ENCODE measurements at regions of chr1 and their contacts with region 1.

Region 1: GRCh38 chr1:198465201-198466144 is 75.0 kb downstream of the ATP6V1G3 start:
- DNase-seq: peak in 3 of 14 experiments; percentile 54 to 64 (median 57)
- ATAC-seq: peak; percentile 60
- H3K4me3 ChIP-seq: no peak overlapping the region
- H3K4me3 Mint-ChIP-seq: no peak overlapping the region
- H3K27ac ChIP-seq: no peak overlapping the region
- H3K27ac Mint-ChIP-seq: no peak overlapping the region
- H3K4me1 ChIP-seq: no peaks in the 10 kb centered on the region
- H3K4me1 Mint-ChIP-seq: no peaks in the 10 kb centered on the region
- H3K27me3 ChIP-seq: no peaks in the 10 kb centered on the region
- H3K27me3 Mint-ChIP-seq: no peaks in the 10 kb centered on the region
- CTCF ChIP-seq: peak; percentile 73

Region 2: DNA sequence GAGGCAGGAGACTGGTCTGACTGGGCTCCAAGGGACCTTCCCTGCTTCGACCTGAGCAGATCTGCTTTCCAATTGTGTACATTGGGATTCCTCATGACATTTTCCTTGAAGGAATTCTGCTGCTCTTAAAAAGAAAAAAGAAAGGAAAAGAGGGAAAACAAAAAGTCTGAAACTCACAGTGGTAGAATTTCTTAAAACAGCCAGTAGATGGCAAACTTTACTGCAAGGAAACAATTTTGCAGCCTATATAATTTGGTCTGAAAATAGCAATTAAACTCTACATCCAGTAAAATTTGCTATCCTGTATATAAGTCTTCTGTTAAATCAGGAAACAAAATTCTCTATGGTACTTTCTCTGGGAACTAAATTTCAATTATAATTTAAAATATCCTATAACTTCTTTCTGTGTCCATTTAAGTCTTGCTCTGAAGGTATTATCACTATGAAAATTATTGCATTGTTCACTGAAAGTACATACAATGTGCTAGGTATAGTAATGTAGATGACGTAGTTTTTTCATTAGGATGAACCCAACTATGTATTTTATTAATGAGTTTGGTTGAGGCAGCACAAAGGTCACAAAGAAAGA is 1137.6 kb before region 1 on chr1:
- CTCF ChIA-PET with region 1: no interaction called
- POLR2A ChIA-PET with region 1: no interaction called
- intact Hi-C with region 1: loop called in 1 of 2 experiments (anchors 10 kb)
- DNase-seq: peak in 2 of 14 experiments; percentile 2 to 9
- ATAC-seq: no peak
- H3K4me3 ChIP-seq: no peak overlapping the region
- H3K4me3 Mint-ChIP-seq: no peak overlapping the region
- H3K27ac ChIP-seq: no peak overlapping the region
- H3K27ac Mint-ChIP-seq: no peak overlapping the region
- H3K4me1 ChIP-seq: no peaks in the 10 kb centered on the region
- H3K4me1 Mint-ChIP-seq: no peaks in the 10 kb centered on the region
- H3K27me3 ChIP-seq: no peaks in the 10 kb centered on the region
- H3K27me3 Mint-ChIP-seq: no peaks in the 10 kb centered on the region
- CTCF ChIP-seq: peak; percentile 69

Region 3: DNA sequence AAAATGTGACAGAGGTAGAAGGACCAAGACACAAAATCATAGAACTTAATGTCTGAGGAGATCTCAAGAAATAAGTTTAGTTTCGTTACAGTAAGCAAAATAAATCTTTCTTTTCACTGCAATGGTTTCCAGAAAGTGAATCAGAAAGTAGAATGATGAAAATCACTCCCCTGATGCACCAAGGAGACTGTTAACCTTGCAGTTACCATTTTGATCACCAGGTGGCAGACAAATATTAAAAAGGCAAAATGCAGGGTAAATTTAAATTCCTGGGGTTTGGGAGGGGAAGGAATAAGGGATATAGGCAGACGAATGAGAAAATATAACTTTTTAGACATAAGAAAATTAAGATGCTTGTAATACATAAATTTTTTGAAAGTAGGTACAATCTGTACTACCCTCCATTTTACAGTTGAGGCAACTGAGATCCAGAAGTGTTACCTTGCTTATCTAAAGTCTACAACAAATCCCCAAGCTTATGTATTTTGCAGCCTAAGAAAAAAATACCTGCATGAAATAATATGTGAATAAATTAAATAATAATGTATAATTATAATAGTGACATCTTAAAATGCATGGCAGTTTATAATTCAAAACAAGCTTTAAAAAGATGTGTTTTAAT is 944.2 kb before region 1 on chr1:
- CTCF ChIA-PET with region 1: no interaction called
- POLR2A ChIA-PET with region 1: no interaction called
- intact Hi-C with region 1: loop called (anchors 1 to 5 kb)
- DNase-seq: peak in 4 of 14 experiments; percentile 5 to 57 (median 50)
- ATAC-seq: peak; percentile 52
- H3K4me3 ChIP-seq: no peak overlapping the region
- H3K4me3 Mint-ChIP-seq: no peak overlapping the region
- H3K27ac ChIP-seq: no peak overlapping the region
- H3K27ac Mint-ChIP-seq: no peak overlapping the region
- H3K4me1 ChIP-seq: no peaks in the 10 kb centered on the region
- H3K4me1 Mint-ChIP-seq: no peaks in the 10 kb centered on the region
- H3K27me3 ChIP-seq: no peaks in the 10 kb centered on the region
- H3K27me3 Mint-ChIP-seq: no peaks in the 10 kb centered on the region
- CTCF ChIP-seq: peak; percentile 85

Region 4: DNA sequence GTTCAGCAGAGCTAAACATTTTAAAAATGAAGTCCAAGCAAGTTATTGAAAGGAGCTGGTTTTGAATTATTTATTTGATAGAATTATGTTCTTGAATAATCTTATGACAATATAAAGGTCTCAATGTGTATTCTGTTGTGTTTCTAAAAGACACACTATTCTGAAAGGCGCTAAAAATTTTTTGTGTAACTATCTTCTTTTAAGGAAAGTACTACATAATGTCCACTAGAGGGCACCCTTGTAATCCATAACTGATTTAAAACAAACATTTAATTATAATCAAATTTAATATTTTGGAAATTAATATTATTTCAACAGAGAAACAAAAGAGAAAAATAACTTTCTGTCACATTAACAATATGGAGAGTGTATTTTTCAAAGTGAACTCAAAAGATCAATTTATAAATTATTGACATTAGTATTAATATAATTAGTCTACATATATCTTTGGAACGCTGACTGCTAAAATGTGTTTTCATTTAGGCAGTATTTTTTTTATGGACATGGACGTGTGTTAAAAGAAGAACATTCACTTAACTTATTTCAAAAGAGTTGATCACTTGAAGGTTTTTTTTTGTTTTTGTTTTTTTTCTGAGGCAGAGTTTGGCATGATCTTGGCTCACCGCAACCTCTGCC is 938.6 kb before region 1 on chr1:
- CTCF ChIA-PET with region 1: no interaction called
- POLR2A ChIA-PET with region 1: no interaction called
- intact Hi-C with region 1: loop called (anchors 1 to 5 kb)
- DNase-seq: peak in 3 of 14 experiments; percentile 40 to 59 (median 52)
- ATAC-seq: peak; percentile 43
- H3K4me3 ChIP-seq: no peak overlapping the region
- H3K4me3 Mint-ChIP-seq: no peak overlapping the region
- H3K27ac ChIP-seq: no peak overlapping the region
- H3K27ac Mint-ChIP-seq: no peak overlapping the region
- H3K4me1 ChIP-seq: no peaks in the 10 kb centered on the region
- H3K4me1 Mint-ChIP-seq: no peaks in the 10 kb centered on the region
- H3K27me3 ChIP-seq: no peaks in the 10 kb centered on the region
- H3K27me3 Mint-ChIP-seq: no peaks in the 10 kb centered on the region
- CTCF ChIP-seq: peak; percentile 87

Region 5: DNA sequence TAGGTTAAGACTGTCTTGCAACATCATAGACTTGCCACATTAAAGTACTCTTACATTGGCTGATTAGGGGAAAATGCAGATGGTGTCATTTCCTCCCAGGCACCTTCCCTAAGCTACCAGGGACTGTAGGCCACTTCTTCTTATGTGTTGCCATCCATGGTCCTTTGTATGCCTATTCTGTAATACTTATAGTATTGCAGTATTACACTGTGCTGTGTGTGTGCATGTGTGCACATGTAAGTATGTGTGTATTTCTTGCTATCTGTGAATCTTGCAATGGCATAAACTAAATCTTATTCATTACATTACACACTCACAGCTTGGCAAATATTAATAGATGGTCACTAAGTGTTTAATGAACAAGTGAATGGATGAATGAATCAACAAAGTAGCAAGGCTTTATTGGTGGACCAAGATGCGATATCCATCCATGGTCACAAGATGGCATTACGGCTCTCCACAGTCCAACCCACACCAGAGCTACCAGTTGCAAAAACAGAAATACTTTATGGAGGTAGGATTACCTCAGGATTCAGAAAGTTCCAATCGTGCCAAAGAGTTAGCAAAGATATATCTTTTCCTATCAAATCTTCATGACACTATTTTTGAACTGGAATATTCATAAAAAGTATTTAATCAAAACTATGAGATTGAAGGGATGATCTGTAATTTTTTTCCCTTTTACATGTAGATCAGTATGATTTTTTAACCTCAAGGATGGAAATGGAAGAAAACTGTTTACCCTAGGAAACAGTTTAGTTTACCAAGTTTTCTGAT is 850.4 kb before region 1 on chr1:
- CTCF ChIA-PET with region 1: no interaction called
- POLR2A ChIA-PET with region 1: no interaction called
- intact Hi-C with region 1: loop called (anchors 5 kb)
- DNase-seq: peak in 10 of 14 experiments; percentile 1 to 50 (median 6)
- ATAC-seq: peak; percentile 43
- H3K4me3 ChIP-seq: no peak overlapping the region
- H3K4me3 Mint-ChIP-seq: no peak overlapping the region
- H3K27ac ChIP-seq: no peak overlapping the region
- H3K27ac Mint-ChIP-seq: no peak overlapping the region
- H3K4me1 ChIP-seq: no peaks in the 10 kb centered on the region
- H3K4me1 Mint-ChIP-seq: peaks cover 5% of the 10 kb centered on the region
- H3K27me3 ChIP-seq: no peaks in the 10 kb centered on the region
- H3K27me3 Mint-ChIP-seq: no peaks in the 10 kb centered on the region
- CTCF ChIP-seq: peak; percentile 58

Region 6: GRCh38 chr1:197868751-197869489 is 596.6 kb before region 1 on chr1:
- CTCF ChIA-PET with region 1: no interaction called
- POLR2A ChIA-PET with region 1: no interaction called
- intact Hi-C with region 1: loop called in 1 of 2 experiments (anchors 5 kb)
- DNase-seq: peak in 11 of 14 experiments; percentile 2 to 76 (median 25)
- ATAC-seq: peak; percentile 89
- H3K4me3 ChIP-seq: no peak overlapping the region
- H3K4me3 Mint-ChIP-seq: no peak overlapping the region
- H3K27ac ChIP-seq: no peak overlapping the region
- H3K27ac Mint-ChIP-seq: no peak overlapping the region
- H3K4me1 ChIP-seq: no peaks in the 10 kb centered on the region
- H3K4me1 Mint-ChIP-seq: no peaks in the 10 kb centered on the region
- H3K27me3 ChIP-seq: no peaks in the 10 kb centered on the region
- H3K27me3 Mint-ChIP-seq: peaks cover 4% of the 10 kb centered on the region
- CTCF ChIP-seq: peak; percentile 67

Region 7: GRCh38 chr1:198088360-198089071 is 377.0 kb before region 1 on chr1:
- CTCF ChIA-PET with region 1: interaction called, 3 read pairs
- POLR2A ChIA-PET with region 1: no interaction called
- intact Hi-C with region 1: loop called (anchors 1 kb)
- DNase-seq: peak in 3 of 14 experiments; percentile 52 to 59 (median 56)
- ATAC-seq: no peak
- H3K4me3 ChIP-seq: no peak overlapping the region
- H3K4me3 Mint-ChIP-seq: no peak overlapping the region
- H3K27ac ChIP-seq: no peak overlapping the region
- H3K27ac Mint-ChIP-seq: no peak overlapping the region
- H3K4me1 ChIP-seq: no peaks in the 10 kb centered on the region
- H3K4me1 Mint-ChIP-seq: no peaks in the 10 kb centered on the region
- H3K27me3 ChIP-seq: no peaks in the 10 kb centered on the region
- H3K27me3 Mint-ChIP-seq: no peaks in the 10 kb centered on the region
- CTCF ChIP-seq: peak; percentile 80